ENCODE measurements at regions of chr22 and their contacts with region 1.

Region 1: GRCh38 chr22:17830043-17830961 is 56.0 kb upstream of the BID start:
- DNase-seq: peak; percentile 81 to 89
- H3K4me3 ChIP-seq: no peak overlapping the region
- H3K4me3 Mint-ChIP-seq: no peak overlapping the region
- H3K27ac Mint-ChIP-seq: no peak overlapping the region
- H3K4me1 ChIP-seq: no peaks in the 10 kb centered on the region
- H3K4me1 Mint-ChIP-seq: no peaks in the 10 kb centered on the region
- H3K27me3 ChIP-seq: no peaks in the 10 kb centered on the region
- H3K27me3 Mint-ChIP-seq: no peaks in the 10 kb centered on the region
- CTCF ChIP-seq: peak; percentile 97 to 98

Region 2: GRCh38 chr22:17678872-17679271 is 151.4 kb before region 1 on chr22:
- CTCF ChIA-PET with region 1: no interaction called
- POLR2A ChIA-PET with region 1: no interaction called
- intact Hi-C with region 1: no loop called
- DNase-seq: no peak
- H3K4me3 ChIP-seq: no peak overlapping the region
- H3K4me3 Mint-ChIP-seq: no peak overlapping the region
- H3K27ac Mint-ChIP-seq: no peak overlapping the region
- H3K4me1 ChIP-seq: peaks cover 8% of the 10 kb centered on the region
- H3K4me1 Mint-ChIP-seq: peaks cover 7% of the 10 kb centered on the region
- H3K27me3 ChIP-seq: no peaks in the 10 kb centered on the region
- H3K27me3 Mint-ChIP-seq: no peaks in the 10 kb centered on the region
- CTCF ChIP-seq: no peak

Region 3: GRCh38 chr22:17846326-17846992 is 16.2 kb after region 1 on chr22:
- CTCF ChIA-PET with region 1: no interaction called
- POLR2A ChIA-PET with region 1: no interaction called
- intact Hi-C with region 1: loop called (anchors 1 kb)
- DNase-seq: no peak
- H3K4me3 ChIP-seq: no peak overlapping the region
- H3K4me3 Mint-ChIP-seq: no peak overlapping the region
- H3K27ac Mint-ChIP-seq: no peak overlapping the region
- H3K4me1 ChIP-seq: peaks cover 12% of the 10 kb centered on the region
- H3K4me1 Mint-ChIP-seq: no peaks in the 10 kb centered on the region
- H3K27me3 ChIP-seq: no peaks in the 10 kb centered on the region
- H3K27me3 Mint-ChIP-seq: no peaks in the 10 kb centered on the region
- CTCF ChIP-seq: no peak

Region 4: GRCh38 chr22:17891481-17892167 is 61.3 kb after region 1 on chr22:
- CTCF ChIA-PET with region 1: interaction called, 9 read pairs
- POLR2A ChIA-PET with region 1: no interaction called
- intact Hi-C with region 1: loop called (anchors 1 kb)
- DNase-seq: peak; percentile 54 to 57
- H3K4me3 ChIP-seq: no peak overlapping the region
- H3K4me3 Mint-ChIP-seq: no peak overlapping the region
- H3K27ac Mint-ChIP-seq: peak overlapping the region; percentile 88
- H3K4me1 ChIP-seq: peaks cover 39% of the 10 kb centered on the region
- H3K4me1 Mint-ChIP-seq: peaks cover 42% of the 10 kb centered on the region
- H3K27me3 ChIP-seq: no peaks in the 10 kb centered on the region
- H3K27me3 Mint-ChIP-seq: no peaks in the 10 kb centered on the region
- CTCF ChIP-seq: peak in 1 of 2 experiments; percentile 66

Region 5: GRCh38 chr22:18024276-18024947 is 194.1 kb after region 1 on chr22 and contains the start of gene MICAL3:
- CTCF ChIA-PET with region 1: interaction called, 4 read pairs
- POLR2A ChIA-PET with region 1: no interaction called
- intact Hi-C with region 1: loop called (anchors 1 kb)
- DNase-seq: peak; percentile 44 to 83
- H3K4me3 ChIP-seq: peak within 1 kb of the TSS; percentile 55
- H3K4me3 Mint-ChIP-seq: peak within 1 kb of the TSS; percentile 76
- H3K27ac Mint-ChIP-seq: peak within 1 kb of the TSS; percentile 21
- H3K4me1 ChIP-seq: peaks cover 3% of the 10 kb centered on the region; the same call in 1 of the 2 replicates
- H3K4me1 Mint-ChIP-seq: peaks cover 6% of the 10 kb centered on the region
- H3K27me3 ChIP-seq: no peaks in the 10 kb centered on the region
- H3K27me3 Mint-ChIP-seq: peaks cover 2% of the 10 kb centered on the region
- CTCF ChIP-seq: peak; percentile 39 to 67
- total RNA-seq, gene MICAL3: 65.6 and 74.0 TPM in 2 replicates

Region 6: GRCh38 chr22:18029686-18030267 is 199.5 kb after region 1 on chr22:
- CTCF ChIA-PET with region 1: interaction called, 3 read pairs
- POLR2A ChIA-PET with region 1: interaction called, 10 read pairs
- intact Hi-C with region 1: loop called (anchors 1 kb)
- DNase-seq: no peak
- H3K4me3 ChIP-seq: no peak overlapping the region
- H3K4me3 Mint-ChIP-seq: no peak overlapping the region
- H3K27ac Mint-ChIP-seq: no peak overlapping the region
- H3K4me1 ChIP-seq: peaks cover under 1% of the 10 kb centered on the region; the same call in 1 of the 2 replicates
- H3K4me1 Mint-ChIP-seq: peaks cover 5% of the 10 kb centered on the region
- H3K27me3 ChIP-seq: no peaks in the 10 kb centered on the region
- H3K27me3 Mint-ChIP-seq: peaks cover 2% of the 10 kb centered on the region
- CTCF ChIP-seq: no peak